B cell (primary cell): ENCODE measurements at regions of chr3 and their contacts with region 1.

Region 1: GRCh38 chr3:186534113-186534669 is 10.0 kb downstream of the CRYGS start:
- DNase-seq: peak; percentile 92
- ATAC-seq: peak; percentile 80
- H3K4me3 ChIP-seq: peak overlapping the region in 1 of 5 experiments; percentile 18
- H3K4me3 Mint-ChIP-seq: peak overlapping the region; percentile 88
- H3K27ac ChIP-seq: peak overlapping the region; percentile 82 to 87
- H3K27ac Mint-ChIP-seq: peak overlapping the region; percentile 94
- H3K4me1 ChIP-seq: peaks cover 57 to 66% of the 10 kb centered on the region in 2 donors
- H3K4me1 Mint-ChIP-seq: peaks cover 69% of the 10 kb centered on the region
- H3K27me3 ChIP-seq: peaks cover 0 to 11% (median 5%) of the 10 kb centered on the region in 4 experiments
- H3K27me3 Mint-ChIP-seq: no peaks in the 10 kb centered on the region
- CTCF ChIP-seq: no peak

Region 2: DNA sequence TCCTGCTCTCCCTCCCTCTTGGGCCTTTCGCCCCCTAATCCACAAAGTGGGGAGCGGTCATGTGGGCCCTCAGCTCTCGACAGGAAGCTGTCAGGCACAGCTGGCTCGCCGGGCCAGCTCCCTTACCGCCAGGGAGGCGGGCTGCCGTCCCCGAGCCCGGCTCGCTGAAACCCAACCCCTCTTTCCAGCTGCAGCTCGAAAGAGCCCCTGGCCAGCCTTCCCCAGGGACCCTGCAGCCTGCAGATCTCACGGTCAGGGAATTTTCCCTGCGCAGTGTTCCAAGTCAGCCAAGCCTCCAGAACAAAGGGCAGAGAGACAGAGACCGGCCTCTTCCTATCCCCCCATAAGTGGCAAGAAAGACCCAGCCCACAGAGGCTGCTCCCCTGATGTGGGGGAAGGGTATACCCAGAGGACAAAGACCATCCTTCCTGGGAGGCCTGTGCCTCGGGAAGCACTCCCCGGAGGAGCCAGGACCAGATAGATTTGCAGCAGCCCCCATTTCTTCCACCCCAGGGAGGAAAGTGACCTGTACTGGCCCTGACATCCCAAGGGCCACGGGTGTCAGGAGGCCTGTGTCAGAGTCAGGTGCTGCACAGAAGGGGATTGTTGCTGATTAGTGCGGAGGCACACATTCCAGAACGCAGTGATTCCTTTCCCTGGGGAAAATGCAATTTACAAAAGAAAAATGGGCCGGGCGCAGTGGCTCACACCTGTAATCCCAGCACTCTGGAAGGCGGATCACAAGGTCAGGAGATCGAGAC is 1855.0 kb before region 1 on chr3:
- CTCF ChIA-PET with region 1: no interaction called
- POLR2A ChIA-PET with region 1: no interaction called
- intact Hi-C with region 1: no loop called
- DNase-seq: no peak
- ATAC-seq: no peak
- H3K4me3 ChIP-seq: no peak overlapping the region
- H3K4me3 Mint-ChIP-seq: no peak overlapping the region
- H3K27ac ChIP-seq: peak overlapping the region in 1 of 2 donors; percentile 19
- H3K27ac Mint-ChIP-seq: no peak overlapping the region
- H3K4me1 ChIP-seq: peaks cover 34 to 36% of the 10 kb centered on the region in 2 donors
- H3K4me1 Mint-ChIP-seq: peaks cover 34% of the 10 kb centered on the region
- H3K27me3 ChIP-seq: no peaks in the 10 kb centered on the region
- H3K27me3 Mint-ChIP-seq: no peaks in the 10 kb centered on the region
- CTCF ChIP-seq: no peak

Region 3: GRCh38 chr3:185937689-185938463 is 596.3 kb before region 1 on chr3 and contains the start of gene TRA2B:
- CTCF ChIA-PET with region 1: interaction called, 6 read pairs
- POLR2A ChIA-PET with region 1: interaction called, 4 read pairs
- intact Hi-C with region 1: loop called (anchors 1 kb)
- DNase-seq: peak; percentile 99
- ATAC-seq: peak; percentile 89
- H3K4me3 ChIP-seq: peak within 1 kb of the TSS; percentile 99 to 100 (median 100)
- H3K4me3 Mint-ChIP-seq: peak within 1 kb of the TSS; percentile 99
- H3K27ac ChIP-seq: peak within 1 kb of the TSS; percentile 99 to 100
- H3K27ac Mint-ChIP-seq: peak within 1 kb of the TSS; percentile 100
- H3K4me1 ChIP-seq: peaks cover 26 to 28% of the 10 kb centered on the region in 2 donors
- H3K4me1 Mint-ChIP-seq: peaks cover 39% of the 10 kb centered on the region
- H3K27me3 ChIP-seq: no peaks in the 10 kb centered on the region
- H3K27me3 Mint-ChIP-seq: no peaks in the 10 kb centered on the region
- CTCF ChIP-seq: peak; percentile 51
- total RNA-seq, gene TRA2B: 218 and 220 TPM in 2 replicates

Region 4: DNA sequence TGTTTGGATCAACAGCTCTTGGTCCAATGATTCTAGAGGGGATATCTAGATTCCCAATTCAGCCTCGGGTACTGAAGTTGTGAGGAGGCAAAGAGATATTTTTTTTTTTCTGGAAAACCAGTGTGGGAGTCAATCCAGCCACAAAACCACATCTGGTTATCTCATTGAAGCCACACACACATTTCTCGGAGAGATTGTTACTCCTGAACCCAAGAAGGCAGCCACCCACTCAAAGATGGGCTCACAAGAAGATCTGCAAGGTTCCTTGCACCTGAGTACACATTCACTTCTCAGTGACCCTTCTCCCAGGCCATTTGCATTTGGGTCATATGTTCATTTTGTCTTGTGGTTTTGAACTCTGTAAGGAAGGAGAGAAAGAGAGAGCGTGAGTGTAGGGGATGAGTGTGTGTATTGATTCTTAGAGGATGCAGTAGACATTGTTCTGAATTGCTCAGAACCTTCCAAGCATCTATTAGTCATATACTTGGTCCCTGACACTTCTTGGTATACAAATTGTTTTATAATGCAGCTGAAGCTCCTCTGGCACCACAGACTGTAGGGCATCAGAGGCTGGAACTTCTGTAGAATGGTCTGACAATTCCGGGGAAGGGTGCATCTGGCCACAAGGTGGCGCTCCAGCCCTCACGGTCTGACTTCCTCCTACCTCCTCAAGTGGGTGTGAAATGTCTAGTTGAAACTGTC is 557.1 kb before region 1 on chr3:
- CTCF ChIA-PET with region 1: interaction called, 203 read pairs
- POLR2A ChIA-PET with region 1: no interaction called
- intact Hi-C with region 1: no loop called
- DNase-seq: peak; percentile 84
- ATAC-seq: peak; percentile 88
- H3K4me3 ChIP-seq: no peak overlapping the region
- H3K4me3 Mint-ChIP-seq: no peak overlapping the region
- H3K27ac ChIP-seq: no peak overlapping the region
- H3K27ac Mint-ChIP-seq: peak overlapping the region; percentile 11
- H3K4me1 ChIP-seq: peaks cover 0 to 2% of the 10 kb centered on the region in 2 donors
- H3K4me1 Mint-ChIP-seq: peaks cover 7% of the 10 kb centered on the region
- H3K27me3 ChIP-seq: no peaks in the 10 kb centered on the region
- H3K27me3 Mint-ChIP-seq: no peaks in the 10 kb centered on the region
- CTCF ChIP-seq: peak; percentile 93

Region 5: DNA sequence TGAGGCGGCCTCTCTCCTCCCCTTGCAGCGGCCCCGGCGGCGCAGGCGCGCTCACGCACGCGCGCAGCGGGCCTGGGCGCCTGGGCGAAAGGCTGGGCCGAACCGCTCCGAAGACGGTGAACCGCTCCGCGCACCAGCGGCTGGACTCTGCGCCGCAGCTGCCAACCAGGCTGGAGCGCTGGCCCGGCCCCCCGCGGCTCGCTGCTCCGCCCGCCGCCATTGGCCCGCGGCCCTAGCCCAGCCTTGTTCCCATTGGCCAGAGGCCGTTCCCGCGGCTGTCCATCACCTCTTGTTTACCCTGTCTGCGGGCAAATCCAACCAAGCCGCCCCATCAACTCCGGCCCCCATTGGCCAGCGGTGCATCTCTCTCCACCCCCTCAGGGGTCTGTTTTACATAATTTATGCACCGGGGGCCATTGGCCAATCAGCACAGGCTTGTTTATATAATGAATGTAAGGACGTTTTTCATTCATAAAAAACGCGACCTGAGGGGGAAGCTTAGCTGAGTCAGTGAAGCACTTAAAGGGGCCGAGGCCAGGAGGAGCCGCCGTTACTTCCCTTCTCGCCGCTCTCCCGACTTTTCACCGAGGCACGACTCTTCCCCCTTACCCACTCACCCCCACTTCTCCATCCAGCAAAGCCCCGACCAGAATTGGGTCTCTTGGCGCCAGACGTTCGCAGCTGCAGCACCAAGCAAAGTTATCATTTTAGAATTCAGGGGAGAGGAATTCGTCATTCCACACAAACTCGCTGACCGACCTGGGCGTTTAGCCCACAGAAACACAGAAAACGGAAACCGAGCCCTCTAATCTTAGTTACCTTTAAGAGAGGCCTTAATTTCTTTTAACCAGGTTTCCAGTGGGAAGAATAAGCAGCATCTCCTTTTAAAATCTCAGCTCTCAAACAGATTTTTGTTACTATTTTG is 425.0 kb before region 1 on chr3 and contains the start of gene ETV5:
- CTCF ChIA-PET with region 1: no interaction called
- POLR2A ChIA-PET with region 1: interaction called, 7 read pairs
- intact Hi-C with region 1: loop called (anchors 1 kb)
- DNase-seq: peak; percentile 95
- ATAC-seq: peak; percentile 93
- H3K4me3 ChIP-seq: peak within 1 kb of the TSS; percentile 51 to 73 (median 63)
- H3K4me3 Mint-ChIP-seq: peak within 1 kb of the TSS; percentile 96
- H3K27ac ChIP-seq: no peak within 1 kb of the TSS
- H3K27ac Mint-ChIP-seq: peak within 1 kb of the TSS; percentile 71
- H3K4me1 ChIP-seq: peaks cover 32 to 41% of the 10 kb centered on the region in 2 donors
- H3K4me1 Mint-ChIP-seq: peaks cover 38% of the 10 kb centered on the region
- H3K27me3 ChIP-seq: peaks cover 2 to 79% (median 41%) of the 10 kb centered on the region in 4 experiments
- H3K27me3 Mint-ChIP-seq: peaks cover 51% of the 10 kb centered on the region
- CTCF ChIP-seq: no peak
- total RNA-seq, gene ETV5: 0.10 and 0.74 TPM in 2 replicates

Region 6: DNA sequence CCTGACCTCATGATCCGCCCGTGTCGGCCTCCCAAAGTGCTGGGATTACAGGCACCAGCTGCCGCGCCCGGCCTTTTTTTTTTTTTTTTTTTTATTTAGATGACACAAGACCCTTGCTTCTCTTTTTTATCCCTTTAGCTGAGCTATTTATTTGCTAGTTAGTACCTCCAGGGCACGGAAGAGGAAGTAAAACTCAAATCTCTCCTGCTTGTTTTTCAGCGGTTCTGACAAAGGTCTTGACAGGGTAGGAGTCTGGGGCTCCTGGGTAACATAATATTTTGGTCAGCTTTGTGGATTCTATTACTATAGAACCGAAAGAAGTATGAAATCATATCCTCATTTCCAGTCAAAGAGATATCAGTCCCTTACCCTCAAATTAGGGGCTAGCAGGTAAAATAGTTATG is 381.3 kb before region 1 on chr3:
- CTCF ChIA-PET with region 1: interaction called, 6 read pairs
- POLR2A ChIA-PET with region 1: no interaction called
- intact Hi-C with region 1: loop called (anchors 2 kb)
- DNase-seq: peak; percentile 88
- ATAC-seq: peak; percentile 90
- H3K4me3 ChIP-seq: peak overlapping the region in 3 of 5 experiments; percentile 29 to 34 (median 30)
- H3K4me3 Mint-ChIP-seq: peak overlapping the region; percentile 60
- H3K27ac ChIP-seq: peak overlapping the region; percentile 81 to 89
- H3K27ac Mint-ChIP-seq: peak overlapping the region; percentile 95
- H3K4me1 ChIP-seq: peaks cover 28 to 40% of the 10 kb centered on the region in 2 donors
- H3K4me1 Mint-ChIP-seq: peaks cover 35% of the 10 kb centered on the region
- H3K27me3 ChIP-seq: no peaks in the 10 kb centered on the region
- H3K27me3 Mint-ChIP-seq: no peaks in the 10 kb centered on the region
- CTCF ChIP-seq: no peak

Region 7: GRCh38 chr3:186361762-186362536 is 172.2 kb before region 1 on chr3 and contains the start of gene DGKG:
- CTCF ChIA-PET with region 1: no interaction called
- POLR2A ChIA-PET with region 1: interaction called, 3 read pairs
- intact Hi-C with region 1: loop called (anchors 5 kb)
- DNase-seq: peak; percentile 76
- ATAC-seq: peak; percentile 81
- H3K4me3 ChIP-seq: peak within 1 kb of the TSS; percentile 52 to 65 (median 58)
- H3K4me3 Mint-ChIP-seq: peak within 1 kb of the TSS; percentile 87
- H3K27ac ChIP-seq: peak within 1 kb of the TSS in 1 of 2 donors; percentile 9
- H3K27ac Mint-ChIP-seq: peak within 1 kb of the TSS; percentile 67
- H3K4me1 ChIP-seq: peaks cover 19 to 22% of the 10 kb centered on the region in 2 donors
- H3K4me1 Mint-ChIP-seq: peaks cover 24% of the 10 kb centered on the region
- H3K27me3 ChIP-seq: peaks cover 0 to 34% (median 11%) of the 10 kb centered on the region in 4 experiments
- H3K27me3 Mint-ChIP-seq: peaks cover 7% of the 10 kb centered on the region
- CTCF ChIP-seq: no peak
- total RNA-seq, gene DGKG: 10.9 and 11.6 TPM in 2 replicates

Region 8: GRCh38 chr3:186520957-186521842 is 13.0 kb before region 1 on chr3:
- CTCF ChIA-PET with region 1: interaction called, 56 read pairs
- POLR2A ChIA-PET with region 1: interaction called, 3 read pairs
- intact Hi-C with region 1: loop called (anchors 2 kb)
- DNase-seq: peak; percentile 69
- ATAC-seq: peak; percentile 39
- H3K4me3 ChIP-seq: peak overlapping the region in 1 of 5 experiments; percentile 12
- H3K4me3 Mint-ChIP-seq: peak overlapping the region; percentile 30
- H3K27ac ChIP-seq: peak overlapping the region; percentile 19 to 64
- H3K27ac Mint-ChIP-seq: peak overlapping the region; percentile 88
- H3K4me1 ChIP-seq: peaks cover 52 to 59% of the 10 kb centered on the region in 2 donors
- H3K4me1 Mint-ChIP-seq: peaks cover 68% of the 10 kb centered on the region
- H3K27me3 ChIP-seq: peaks cover 0 to 4% (median 0%) of the 10 kb centered on the region in 4 experiments
- H3K27me3 Mint-ChIP-seq: peaks cover 3% of the 10 kb centered on the region
- CTCF ChIP-seq: no peak